ENCODE measurements at regions of chr18 and their contacts with region 1.

Region 1: GRCh38 chr18:2723207-2723606 is 67.7 kb downstream of the SMCHD1 start:
- DNase-seq: no peak
- ATAC-seq: no peak
- H3K4me3 ChIP-seq: no peak overlapping the region
- H3K4me3 Mint-ChIP-seq: no peak overlapping the region
- H3K27ac ChIP-seq: peak overlapping the region in 1 of 2 experiments; percentile 2
- H3K27ac Mint-ChIP-seq: peak overlapping the region; percentile 24
- H3K4me1 ChIP-seq: no peaks in the 10 kb centered on the region
- H3K4me1 Mint-ChIP-seq: peaks cover 39% of the 10 kb centered on the region
- H3K27me3 ChIP-seq: no peaks in the 10 kb centered on the region
- H3K27me3 Mint-ChIP-seq: no peaks in the 10 kb centered on the region
- CTCF ChIP-seq: no peak

Region 2: GRCh38 chr18:2741651-2742050 is 18.4 kb after region 1 on chr18:
- CTCF ChIA-PET with region 1: no interaction called
- POLR2A ChIA-PET with region 1: interaction called, 3 read pairs
- intact Hi-C with region 1: loop called in 1 of 2 experiments (anchors 2 kb)
- DNase-seq: no peak
- ATAC-seq: no peak
- H3K4me3 ChIP-seq: no peak overlapping the region
- H3K4me3 Mint-ChIP-seq: no peak overlapping the region
- H3K27ac ChIP-seq: no peak overlapping the region
- H3K27ac Mint-ChIP-seq: no peak overlapping the region
- H3K4me1 ChIP-seq: no peaks in the 10 kb centered on the region
- H3K4me1 Mint-ChIP-seq: peaks cover 13% of the 10 kb centered on the region
- H3K27me3 ChIP-seq: no peaks in the 10 kb centered on the region
- H3K27me3 Mint-ChIP-seq: no peaks in the 10 kb centered on the region
- CTCF ChIP-seq: no peak

Region 3: DNA sequence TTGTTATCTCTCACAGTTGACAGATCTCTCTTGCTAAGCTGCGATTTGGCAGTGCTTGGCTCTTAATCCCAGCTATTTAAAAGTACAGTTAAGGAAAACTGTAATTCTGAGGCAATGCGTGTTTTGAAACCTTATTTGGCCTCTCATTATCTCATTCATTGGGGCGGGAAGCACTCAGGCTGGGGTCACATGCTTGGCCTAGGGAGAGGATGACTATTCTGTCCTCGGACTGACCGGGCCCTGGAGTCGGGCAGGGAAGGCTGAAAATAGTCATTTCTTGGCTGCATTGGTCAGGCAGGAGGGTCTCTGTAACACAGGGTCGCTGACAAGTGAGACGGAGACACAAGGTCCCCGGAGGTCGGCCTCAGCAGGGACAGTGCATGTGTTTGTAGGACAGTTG is 103.4 kb after region 1 on chr18:
- CTCF ChIA-PET with region 1: no interaction called
- POLR2A ChIA-PET with region 1: no interaction called
- intact Hi-C with region 1: no loop called
- DNase-seq: no peak
- ATAC-seq: no peak
- H3K4me3 ChIP-seq: no peak overlapping the region
- H3K4me3 Mint-ChIP-seq: no peak overlapping the region
- H3K27ac ChIP-seq: no peak overlapping the region
- H3K27ac Mint-ChIP-seq: no peak overlapping the region
- H3K4me1 ChIP-seq: no peaks in the 10 kb centered on the region
- H3K4me1 Mint-ChIP-seq: no peaks in the 10 kb centered on the region
- H3K27me3 ChIP-seq: no peaks in the 10 kb centered on the region
- H3K27me3 Mint-ChIP-seq: no peaks in the 10 kb centered on the region
- CTCF ChIP-seq: no peak

Region 4: GRCh38 chr18:3367491-3368091 is 644.4 kb after region 1 on chr18:
- CTCF ChIA-PET with region 1: no interaction called
- POLR2A ChIA-PET with region 1: no interaction called
- intact Hi-C with region 1: no loop called
- DNase-seq: no peak
- ATAC-seq: no peak
- H3K4me3 ChIP-seq: no peak overlapping the region
- H3K4me3 Mint-ChIP-seq: no peak overlapping the region
- H3K27ac ChIP-seq: no peak overlapping the region
- H3K27ac Mint-ChIP-seq: no peak overlapping the region
- H3K4me1 ChIP-seq: no peaks in the 10 kb centered on the region
- H3K4me1 Mint-ChIP-seq: no peaks in the 10 kb centered on the region
- H3K27me3 ChIP-seq: no peaks in the 10 kb centered on the region
- H3K27me3 Mint-ChIP-seq: peaks cover 5% of the 10 kb centered on the region
- CTCF ChIP-seq: no peak

Measured in CD8-positive, alpha-beta T cell (primary cell).